GM12878 (cell line): ENCODE measurements at regions of chr4 and their contacts with region 1.

Region 1: DNA sequence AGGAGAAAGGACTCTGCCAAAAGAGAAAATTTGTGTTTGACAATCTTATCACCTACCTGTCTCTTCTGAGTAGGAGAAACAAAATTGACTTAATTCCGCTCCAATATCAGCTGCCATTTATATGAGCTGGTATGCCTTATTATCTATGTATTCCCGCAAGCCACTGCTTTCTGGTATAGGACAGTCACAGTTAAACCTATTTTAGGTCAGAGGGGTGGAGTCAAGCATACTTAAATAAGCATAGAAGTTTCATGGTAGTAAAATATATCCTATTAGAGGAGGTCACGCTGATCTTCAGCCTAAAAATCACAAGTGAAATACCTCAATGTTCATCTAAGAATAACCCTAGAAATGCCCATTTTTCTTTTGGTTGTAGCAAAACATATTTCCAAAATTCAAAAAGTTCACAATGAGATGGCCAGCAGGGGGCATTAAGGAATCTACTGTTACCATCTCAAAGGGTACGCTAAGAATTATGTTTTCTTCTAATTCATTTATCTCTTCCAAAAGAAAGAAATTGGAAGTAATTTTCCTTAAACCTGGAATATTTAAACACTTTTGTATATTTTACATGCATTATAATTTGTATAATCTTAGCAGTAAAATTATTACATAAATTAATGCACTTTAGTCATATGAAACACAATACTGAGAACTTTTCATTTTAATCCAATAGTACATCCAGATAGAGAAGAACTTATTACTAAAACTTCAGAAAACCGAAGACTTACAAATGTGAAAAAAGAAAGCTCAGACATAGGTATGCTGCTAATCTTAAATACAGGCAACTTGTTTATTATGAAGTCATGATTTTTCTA is 10.5 kb downstream of the PPAT start:
- DNase-seq: no peak
- ATAC-seq: peak; percentile 53
- H3K4me3 ChIP-seq: no peak overlapping the region
- H3K27ac ChIP-seq: no peak overlapping the region
- H3K4me1 ChIP-seq: peaks cover 5% of the 10 kb centered on the region
- H3K27me3 ChIP-seq: no peaks in the 10 kb centered on the region
- CTCF ChIP-seq: peak; percentile 53 to 57 (median 55)
- EP300 ChIP-seq: no peak
- POLR2A ChIP-seq: no peak
- RAD21 ChIP-seq: peak; percentile 55

Region 2: DNA sequence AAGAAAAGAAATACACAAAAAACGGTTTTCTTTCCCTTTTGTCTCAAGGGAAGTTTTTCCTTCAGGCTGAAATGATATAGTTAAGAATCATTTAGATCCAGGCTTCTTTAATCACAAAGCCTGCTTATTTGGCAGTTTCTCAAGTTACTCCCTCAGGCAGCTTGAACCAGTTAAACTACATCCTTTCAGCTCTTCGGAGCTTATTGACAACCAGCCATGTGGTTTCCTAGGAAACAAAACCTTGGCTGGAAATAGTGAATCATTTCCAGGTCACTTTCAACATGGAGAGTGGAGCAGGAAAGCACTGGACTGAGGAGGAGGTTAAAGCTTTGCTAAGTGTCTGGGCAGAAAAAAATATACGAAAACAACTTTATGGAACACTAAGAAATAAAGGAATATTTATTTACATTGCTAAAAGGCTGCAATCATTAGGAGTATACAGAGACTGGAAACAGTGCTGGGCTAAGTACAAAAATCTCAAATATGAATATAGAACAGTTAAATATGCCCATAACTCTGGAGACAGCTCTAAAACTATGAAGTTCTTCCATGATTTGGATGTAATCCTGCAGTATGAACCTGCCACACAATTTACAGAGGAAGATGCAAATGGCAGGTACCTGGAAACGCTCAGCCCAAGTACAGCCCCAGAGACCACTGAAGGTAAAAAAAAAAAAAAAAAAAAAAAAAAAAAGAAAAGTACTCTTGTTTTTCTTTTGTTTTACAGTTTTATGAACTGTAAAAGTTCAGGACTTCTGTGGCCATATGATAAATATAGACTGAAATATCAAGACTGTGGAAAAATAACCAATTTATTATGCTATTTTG is 14.5 kb before region 1 on chr4:
- CTCF ChIA-PET with region 1: interaction called, 15 read pairs
- POLR2A ChIA-PET with region 1: interaction called, 4 read pairs
- RAD21 ChIA-PET with region 1: no interaction called
- SMC1A ChIA-PET with region 1: interaction called, 9 read pairs
- in situ Hi-C with region 1: no loop called
- intact Hi-C with region 1: no loop called
- DNase-seq: no peak
- ATAC-seq: no peak; the same call in 2 of the 3 replicates
- H3K4me3 ChIP-seq: no peak overlapping the region
- H3K27ac ChIP-seq: no peak overlapping the region
- H3K4me1 ChIP-seq: no peaks in the 10 kb centered on the region
- H3K27me3 ChIP-seq: no peaks in the 10 kb centered on the region
- CTCF ChIP-seq: no peak
- EP300 ChIP-seq: no peak
- POLR2A ChIP-seq: no peak
- RAD21 ChIP-seq: no peak

Region 3: GRCh38 chr4:56445699-56446098 is 20.8 kb after region 1 on chr4:
- CTCF ChIA-PET with region 1: interaction called, 89 read pairs
- POLR2A ChIA-PET with region 1: no interaction called
- RAD21 ChIA-PET with region 1: interaction called, 6 read pairs
- SMC1A ChIA-PET with region 1: interaction called, 15 read pairs
- in situ Hi-C with region 1: no loop called
- intact Hi-C with region 1: no loop called
- DNase-seq: no peak
- ATAC-seq: peak; percentile 51
- H3K4me3 ChIP-seq: no peak overlapping the region
- H3K27ac ChIP-seq: no peak overlapping the region
- H3K4me1 ChIP-seq: no peaks in the 10 kb centered on the region; the same call in 1 of the 2 replicates
- H3K27me3 ChIP-seq: no peaks in the 10 kb centered on the region
- CTCF ChIP-seq: no peak
- EP300 ChIP-seq: no peak
- POLR2A ChIP-seq: no peak
- RAD21 ChIP-seq: no peak

Region 4: DNA sequence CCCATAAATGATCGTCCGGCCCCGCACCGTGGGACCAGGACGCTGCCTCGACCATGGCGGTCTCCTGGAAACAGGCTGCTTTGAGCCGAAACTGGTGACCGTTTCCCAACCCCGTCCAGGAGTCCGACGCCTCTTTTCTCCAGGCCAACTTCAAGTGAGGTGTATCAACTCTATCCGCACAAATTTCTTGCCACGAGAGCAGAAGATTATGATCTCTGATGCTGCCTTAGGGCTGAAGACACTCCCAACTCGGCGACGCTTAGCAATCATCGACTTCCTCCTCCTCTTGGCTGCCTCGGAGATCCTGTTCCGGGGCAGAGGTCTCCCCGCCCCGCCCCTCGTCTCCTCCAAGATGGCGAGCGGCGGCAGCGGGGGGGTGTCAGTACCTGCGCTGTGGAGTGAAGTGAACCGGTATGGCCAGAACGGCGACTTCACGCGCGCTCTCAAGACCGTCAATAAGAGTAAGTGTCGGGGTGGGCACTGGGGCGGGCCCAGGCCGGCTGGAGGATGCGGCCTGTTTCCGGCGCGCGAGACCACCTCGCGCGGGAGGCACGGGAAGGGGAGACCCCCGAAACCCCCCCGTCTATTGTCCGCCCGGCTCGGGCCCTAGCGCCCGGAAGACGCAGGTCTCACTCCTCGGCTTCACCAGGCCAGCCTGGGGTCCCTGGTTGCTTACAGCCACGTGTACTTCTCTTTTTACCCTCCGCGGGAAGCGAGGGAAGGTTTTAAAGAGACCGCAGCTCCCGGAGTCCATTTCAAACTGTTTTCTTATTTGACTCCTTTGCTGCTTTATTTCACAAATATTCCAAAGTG is 42.6 kb after region 1 on chr4 and contains the start of gene SRP72:
- CTCF ChIA-PET with region 1: interaction called, 25 read pairs
- POLR2A ChIA-PET with region 1: no interaction called
- RAD21 ChIA-PET with region 1: interaction called, 4 read pairs
- SMC1A ChIA-PET with region 1: interaction called, 9 read pairs
- in situ Hi-C with region 1: no loop called
- intact Hi-C with region 1: no loop called
- DNase-seq: peak; percentile 36
- ATAC-seq: peak; percentile 95
- H3K4me3 ChIP-seq: peak within 1 kb of the TSS; percentile 89
- H3K27ac ChIP-seq: peak within 1 kb of the TSS; percentile 52
- H3K4me1 ChIP-seq: peaks cover 7% of the 10 kb centered on the region; the same call in 1 of the 2 replicates
- H3K27me3 ChIP-seq: no peaks in the 10 kb centered on the region
- CTCF ChIP-seq: no peak
- EP300 ChIP-seq: no peak
- POLR2A ChIP-seq: peak; percentile 96
- RAD21 ChIP-seq: no peak
- polyA plus RNA-seq, gene SRP72: 158 to 186 TPM

Region 5: DNA sequence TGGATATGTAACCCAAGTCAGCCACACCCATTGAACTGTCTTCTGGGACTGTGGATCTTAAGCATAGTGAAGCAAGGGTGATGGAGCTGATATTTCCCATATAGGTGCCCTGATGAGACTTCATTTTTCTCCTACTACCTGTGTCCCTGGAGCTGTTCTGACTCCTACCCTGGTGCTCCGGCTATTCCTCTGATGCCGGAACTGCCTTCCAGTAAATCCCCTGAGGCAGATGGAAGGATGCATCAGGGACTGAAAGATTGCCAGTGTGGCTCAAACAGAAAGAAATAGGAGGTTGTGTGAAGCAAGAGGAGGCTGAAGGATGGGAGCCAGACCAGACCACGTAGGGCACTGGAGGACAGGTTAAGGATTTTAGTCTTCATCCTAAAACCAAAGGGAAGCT is 181.5 kb after region 1 on chr4:
- CTCF ChIA-PET with region 1: no interaction called
- POLR2A ChIA-PET with region 1: no interaction called
- RAD21 ChIA-PET with region 1: no interaction called
- SMC1A ChIA-PET with region 1: no interaction called
- in situ Hi-C with region 1: no loop called
- intact Hi-C with region 1: no loop called
- DNase-seq: no peak
- ATAC-seq: no peak
- H3K4me3 ChIP-seq: no peak overlapping the region
- H3K27ac ChIP-seq: no peak overlapping the region
- H3K4me1 ChIP-seq: no peaks in the 10 kb centered on the region
- H3K27me3 ChIP-seq: no peaks in the 10 kb centered on the region
- CTCF ChIP-seq: no peak
- EP300 ChIP-seq: no peak
- POLR2A ChIP-seq: no peak
- RAD21 ChIP-seq: no peak

Region 6: GRCh38 chr4:56708146-56708545 is 283.2 kb after region 1 on chr4:
- CTCF ChIA-PET with region 1: no interaction called
- POLR2A ChIA-PET with region 1: no interaction called
- RAD21 ChIA-PET with region 1: no interaction called
- SMC1A ChIA-PET with region 1: no interaction called
- in situ Hi-C with region 1: no loop called
- intact Hi-C with region 1: no loop called
- DNase-seq: no peak
- ATAC-seq: no peak
- H3K4me3 ChIP-seq: no peak overlapping the region
- H3K27ac ChIP-seq: no peak overlapping the region
- H3K4me1 ChIP-seq: no peaks in the 10 kb centered on the region
- H3K27me3 ChIP-seq: no peaks in the 10 kb centered on the region; a peak in 3 of 4 replicates
- CTCF ChIP-seq: no peak
- EP300 ChIP-seq: no peak
- POLR2A ChIP-seq: no peak
- RAD21 ChIP-seq: no peak

Region 7: GRCh38 chr4:56799824-56800756 is 375.2 kb after region 1 on chr4:
- CTCF ChIA-PET with region 1: interaction called, 11 read pairs
- POLR2A ChIA-PET with region 1: no interaction called
- RAD21 ChIA-PET with region 1: interaction called, 6 read pairs
- SMC1A ChIA-PET with region 1: interaction called, 11 read pairs
- in situ Hi-C with region 1: no loop called
- intact Hi-C with region 1: loop called (anchors 2 kb)
- DNase-seq: peak; percentile 67
- ATAC-seq: peak; percentile 94
- H3K4me3 ChIP-seq: peak overlapping the region; percentile 80
- H3K27ac ChIP-seq: peak overlapping the region; percentile 14; the same call in 1 of the 2 replicates
- H3K4me1 ChIP-seq: no peaks in the 10 kb centered on the region
- H3K27me3 ChIP-seq: no peaks in the 10 kb centered on the region
- CTCF ChIP-seq: peak; percentile 88 to 98 (median 89)
- EP300 ChIP-seq: no peak
- POLR2A ChIP-seq: no peak
- RAD21 ChIP-seq: peak; percentile 98

Region 8: DNA sequence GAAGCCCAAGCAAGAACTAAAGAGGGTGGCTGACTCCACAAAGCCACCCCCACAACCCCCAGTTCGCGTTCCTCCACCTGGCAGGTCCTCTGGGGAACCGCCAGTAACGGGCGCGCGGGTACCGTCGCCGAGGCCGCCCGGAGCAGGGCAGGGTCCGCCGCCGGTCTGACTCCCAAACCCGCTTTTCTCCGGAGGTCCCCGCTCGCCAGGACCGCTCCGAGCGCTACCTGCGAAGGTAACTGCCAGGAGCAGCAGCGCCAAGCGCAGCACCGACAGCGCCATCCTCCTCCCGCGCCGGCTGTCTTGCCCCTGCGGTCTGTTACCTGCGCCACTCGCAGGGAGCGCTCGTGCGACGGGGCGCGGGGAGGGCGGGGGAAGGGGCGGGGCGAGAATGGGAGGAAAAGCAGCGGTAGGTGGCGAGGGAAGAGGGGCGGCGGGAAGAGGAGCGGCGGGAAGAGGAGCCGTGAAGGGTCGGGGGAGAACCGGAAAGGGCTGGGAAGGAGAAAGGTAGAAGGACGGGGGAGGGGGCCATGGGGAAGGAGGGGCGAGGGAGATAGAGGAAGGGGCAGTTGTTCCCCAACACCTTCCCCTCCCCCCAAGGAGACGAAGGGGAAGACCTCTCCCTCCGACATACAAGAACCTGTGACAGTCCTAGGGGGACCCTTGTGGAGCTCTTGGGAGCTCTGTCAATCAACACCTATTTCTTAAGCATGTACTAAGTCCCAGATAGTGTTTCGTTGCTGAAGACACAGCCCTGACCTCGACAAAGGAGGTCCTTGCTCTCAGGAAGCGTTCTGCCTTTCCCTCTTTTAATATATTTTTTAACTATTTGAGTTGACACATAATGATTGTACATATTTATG is 396.7 kb after region 1 on chr4 and contains the start of gene SPINK2:
- CTCF ChIA-PET with region 1: no interaction called
- POLR2A ChIA-PET with region 1: no interaction called
- RAD21 ChIA-PET with region 1: no interaction called
- SMC1A ChIA-PET with region 1: no interaction called
- in situ Hi-C with region 1: no loop called
- intact Hi-C with region 1: no loop called
- DNase-seq: no peak
- ATAC-seq: peak; percentile 38
- H3K4me3 ChIP-seq: peak within 1 kb of the TSS; percentile 37
- H3K27ac ChIP-seq: no peak within 1 kb of the TSS
- H3K4me1 ChIP-seq: peaks cover 23% of the 10 kb centered on the region
- H3K27me3 ChIP-seq: peaks cover 3 to 5% of the 10 kb centered on the region in 2 experiments; a peak in 3 of 4 replicates
- CTCF ChIP-seq: peak in 1 of 3 experiments; percentile 14; a peak in 1 of 6 replicates
- EP300 ChIP-seq: no peak
- POLR2A ChIP-seq: no peak
- RAD21 ChIP-seq: no peak
- polyA plus RNA-seq, gene SPINK2: 0.61 to 1.0 TPM